Heart right ventricle (tissue), 16 donors: ENCODE measurements at regions of chr19 and their contacts with region 1.

Region 1: DNA sequence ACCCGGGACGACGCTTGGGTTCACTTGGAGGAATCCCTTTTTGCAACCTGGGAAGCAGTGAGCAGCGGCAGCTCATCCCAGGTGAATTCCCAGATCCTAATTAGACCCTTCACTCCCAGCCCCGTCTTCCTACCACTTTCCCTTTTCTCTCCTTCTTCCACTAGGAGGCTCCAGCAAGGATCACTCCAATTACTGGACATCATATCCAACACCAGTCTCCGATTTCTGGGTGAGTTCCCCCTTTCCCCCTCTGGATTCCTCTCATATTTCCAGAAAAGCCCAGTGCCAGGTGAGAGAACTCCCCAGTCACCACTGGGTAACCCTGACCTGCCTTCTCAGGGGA is 17.1 kb upstream of the ZSCAN4 start:
- DNase-seq: no peak
- ATAC-seq: peak in 2 of 8 donors; percentile 11 to 14
- H3K4me3 ChIP-seq: peak overlapping the region in 6 of 10 donors; percentile 1 to 40 (median 38)
- H3K27ac ChIP-seq: peak overlapping the region in 5 of 10 donors; percentile 33 to 60 (median 52)
- H3K4me1 ChIP-seq: peaks cover 0 to 15% (median 0%) of the 10 kb centered on the region in 9 donors
- H3K27me3 ChIP-seq: peaks cover 0 to 3% (median 0%) of the 10 kb centered on the region in 7 donors
- CTCF ChIP-seq: peak in 1 of 9 donors; percentile 28

Region 2: GRCh38 chr19:57566396-57567265 is 85.0 kb before region 1 on chr19:
- intact Hi-C with region 1: no loop called
- DNase-seq: no peak
- ATAC-seq: no peak
- H3K4me3 ChIP-seq: no peak overlapping the region
- H3K27ac ChIP-seq: no peak overlapping the region
- H3K4me1 ChIP-seq: no peaks in the 10 kb centered on the region
- H3K27me3 ChIP-seq: no peaks in the 10 kb centered on the region
- CTCF ChIP-seq: no peak

Region 3: DNA sequence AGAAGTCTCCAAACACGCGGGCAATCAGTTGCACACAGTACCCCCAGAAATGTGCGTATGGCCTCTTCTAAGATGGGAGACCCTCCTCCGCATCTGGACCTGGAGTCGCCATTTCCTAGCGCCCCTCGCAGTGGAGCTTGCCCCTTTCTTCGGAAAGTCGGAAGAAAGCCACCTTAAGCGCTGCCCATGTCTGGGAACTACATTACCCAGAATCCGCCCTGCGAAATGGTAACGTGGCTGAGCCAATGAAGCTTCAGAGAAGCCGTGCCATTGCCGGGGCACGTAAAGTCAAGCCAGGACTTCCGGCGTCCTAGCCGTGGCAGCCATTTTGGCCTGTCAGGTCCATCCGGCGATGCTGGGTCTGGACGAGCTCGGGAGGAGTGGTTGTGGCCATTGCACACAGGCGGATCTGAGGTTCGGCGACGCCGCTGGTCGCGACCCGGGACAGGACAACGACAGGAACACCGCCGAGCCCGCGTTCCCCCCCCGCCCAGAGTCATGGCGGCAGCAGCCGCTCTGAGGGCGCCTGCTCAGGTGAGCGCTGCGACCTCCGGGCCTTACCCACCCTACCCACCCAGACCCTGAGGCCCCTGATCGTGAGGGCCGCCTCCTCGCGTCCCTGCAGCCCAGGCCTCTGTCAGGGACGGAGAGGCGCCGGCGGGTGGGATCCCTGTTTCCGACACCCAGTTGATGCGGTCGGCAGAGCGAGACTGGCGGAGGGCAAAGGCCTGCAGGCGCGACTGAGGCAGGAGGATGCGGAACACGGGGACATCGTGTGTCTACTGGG is 117.9 kb after region 1 on chr19 and contains the start of gene ZNF586:
- intact Hi-C with region 1: loop called in 1 of 10 experiments (anchors 1 kb)
- DNase-seq: peak; percentile 87 to 91
- ATAC-seq: peak; percentile 96 to 99 (median 98)
- H3K4me3 ChIP-seq: peak within 1 kb of the TSS; percentile 72 to 99 (median 95)
- H3K27ac ChIP-seq: peak within 1 kb of the TSS; percentile 72 to 95 (median 91)
- H3K4me1 ChIP-seq: peaks cover 0 to 46% (median 24%) of the 10 kb centered on the region in 9 donors
- H3K27me3 ChIP-seq: no peaks in the 10 kb centered on the region
- CTCF ChIP-seq: no peak
- total RNA-seq, gene ZNF586: 7.6 to 14.4 (median 11.0) TPM